ENCODE measurements at regions of chr20 and their contacts with region 1.

Region 1: GRCh38 chr20:43448748-43449535 is 8.8 kb upstream of the SRSF6 start:
- DNase-seq: peak; percentile 36
- ATAC-seq: peak; percentile 71
- H3K4me3 ChIP-seq: no peak overlapping the region
- H3K27ac ChIP-seq: no peak overlapping the region
- H3K4me1 ChIP-seq: peaks cover 0 to 10% of the 10 kb centered on the region in 2 experiments; a peak in 2 of 4 replicates
- H3K27me3 ChIP-seq: no peaks in the 10 kb centered on the region
- CTCF ChIP-seq: peak; percentile 68 to 86 (median 75); a peak in 5 of 6 replicates
- POLR2A ChIP-seq: no peak
- RAD21 ChIP-seq: peak; percentile 93

Region 2: DNA sequence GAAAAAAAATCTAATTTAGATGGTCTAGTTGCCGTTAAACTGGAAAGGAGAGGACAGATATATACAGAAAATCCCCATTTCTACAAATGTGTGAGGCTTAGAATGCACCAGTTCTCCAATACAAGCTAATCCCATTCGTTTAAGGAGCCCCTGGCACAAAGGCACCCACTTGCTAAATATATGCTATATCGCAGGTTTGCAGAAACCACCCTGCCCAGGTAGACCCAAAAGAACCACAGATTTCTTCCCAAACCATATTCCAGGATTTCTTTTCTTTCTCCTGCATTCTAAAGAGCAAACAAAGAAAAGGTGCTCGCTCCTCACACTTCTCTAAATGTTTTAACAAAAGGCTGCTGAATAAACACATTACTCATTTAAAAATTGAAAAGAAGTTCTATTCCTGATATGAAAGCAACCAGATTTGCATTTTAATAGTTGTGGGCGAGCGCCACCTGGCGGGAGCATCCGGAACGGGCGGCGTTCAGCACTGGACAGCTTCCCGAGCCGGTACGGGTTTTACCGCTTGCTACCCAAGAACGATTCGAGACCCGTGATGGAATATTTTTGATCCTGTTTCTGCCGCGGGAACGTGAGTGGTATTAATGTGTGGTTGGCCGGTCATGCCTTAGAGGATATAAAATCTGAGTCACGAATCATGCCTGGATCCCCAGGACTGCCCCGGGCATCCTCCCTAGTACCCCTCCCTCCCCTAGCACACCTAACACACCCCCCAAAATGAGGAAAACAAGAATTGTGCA is 261.3 kb before region 1 on chr20:
- CTCF ChIA-PET with region 1: no interaction called
- POLR2A ChIA-PET with region 1: no interaction called
- RAD21 ChIA-PET with region 1: no interaction called
- intact Hi-C with region 1: no loop called
- DNase-seq: peak; percentile 8
- ATAC-seq: peak; percentile 63
- H3K4me3 ChIP-seq: no peak overlapping the region
- H3K27ac ChIP-seq: no peak overlapping the region
- H3K4me1 ChIP-seq: no peaks in the 10 kb centered on the region
- H3K27me3 ChIP-seq: peaks cover 6% of the 10 kb centered on the region; the same call in 1 of the 2 replicates
- CTCF ChIP-seq: peak; percentile 49 to 96 (median 88); a peak in 5 of 6 replicates
- POLR2A ChIP-seq: no peak
- RAD21 ChIP-seq: peak; percentile 79

Region 3: DNA sequence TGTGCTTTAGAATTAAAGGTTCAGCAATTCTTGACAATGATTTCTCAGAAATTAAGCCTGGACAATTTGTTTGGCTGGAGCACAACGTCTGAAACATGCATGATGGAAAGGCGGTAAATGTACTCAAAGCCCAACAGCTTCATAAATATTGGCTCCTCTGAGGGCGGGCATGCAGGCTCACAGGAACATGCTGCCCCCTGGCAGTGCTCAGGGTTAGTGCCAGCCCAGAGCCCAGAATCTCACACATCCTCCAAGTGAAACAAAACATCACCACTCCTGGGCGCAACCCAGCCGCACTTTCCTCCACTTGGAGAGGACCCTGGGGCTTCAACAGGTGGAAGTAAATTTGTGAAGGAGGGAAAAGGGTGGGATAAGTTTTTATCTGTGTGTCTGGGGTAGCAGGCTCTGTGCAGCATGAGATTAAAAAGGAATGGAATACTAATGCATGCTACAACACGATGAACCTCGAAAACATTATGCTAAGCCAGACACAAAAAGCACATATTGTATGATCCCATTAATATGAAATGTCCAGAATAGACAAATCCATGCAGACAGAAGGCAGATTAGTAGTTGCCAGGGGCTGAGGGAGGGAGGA is 205.2 kb before region 1 on chr20:
- CTCF ChIA-PET with region 1: no interaction called
- POLR2A ChIA-PET with region 1: no interaction called
- RAD21 ChIA-PET with region 1: no interaction called
- intact Hi-C with region 1: no loop called
- DNase-seq: no peak
- ATAC-seq: peak; percentile 79
- H3K4me3 ChIP-seq: no peak overlapping the region
- H3K27ac ChIP-seq: no peak overlapping the region
- H3K4me1 ChIP-seq: no peaks in the 10 kb centered on the region
- H3K27me3 ChIP-seq: peaks cover 62% of the 10 kb centered on the region
- CTCF ChIP-seq: peak in 2 of 3 experiments; percentile 42 to 45; a peak in 4 of 6 replicates
- POLR2A ChIP-seq: no peak
- RAD21 ChIP-seq: 0 out of 2 replicates have a peak, but pooled peaks have one; percentile 22

Region 4: GRCh38 chr20:43691928-43692524 is 243.1 kb after region 1 on chr20:
- CTCF ChIA-PET with region 1: interaction called, 23 read pairs
- POLR2A ChIA-PET with region 1: no interaction called
- RAD21 ChIA-PET with region 1: interaction called in 1 of 2 experiments, 4 read pairs
- intact Hi-C with region 1: loop called (anchors 1 kb)
- DNase-seq: peak; percentile 29
- ATAC-seq: peak; percentile 91
- H3K4me3 ChIP-seq: no peak overlapping the region
- H3K27ac ChIP-seq: no peak overlapping the region
- H3K4me1 ChIP-seq: no peaks in the 10 kb centered on the region
- H3K27me3 ChIP-seq: no peaks in the 10 kb centered on the region
- CTCF ChIP-seq: peak; percentile 60 to 79 (median 77)
- POLR2A ChIP-seq: no peak
- RAD21 ChIP-seq: peak; percentile 72

Region 5: GRCh38 chr20:44196271-44196670 is 747.3 kb after region 1 on chr20:
- CTCF ChIA-PET with region 1: no interaction called
- POLR2A ChIA-PET with region 1: no interaction called
- RAD21 ChIA-PET with region 1: no interaction called
- intact Hi-C with region 1: loop called (anchors 5 kb)
- DNase-seq: no peak
- ATAC-seq: peak; percentile 60
- H3K4me3 ChIP-seq: no peak overlapping the region
- H3K27ac ChIP-seq: no peak overlapping the region
- H3K4me1 ChIP-seq: no peaks in the 10 kb centered on the region
- H3K27me3 ChIP-seq: no peaks in the 10 kb centered on the region
- CTCF ChIP-seq: peak in 2 of 3 experiments; percentile 23 to 34; a peak in 2 of 6 replicates
- POLR2A ChIP-seq: no peak
- RAD21 ChIP-seq: no peak

Measured in HCT116 (cell line).